HepG2 (cell line): ENCODE measurements at regions of chr1 and their contacts with region 1.

Region 1: DNA sequence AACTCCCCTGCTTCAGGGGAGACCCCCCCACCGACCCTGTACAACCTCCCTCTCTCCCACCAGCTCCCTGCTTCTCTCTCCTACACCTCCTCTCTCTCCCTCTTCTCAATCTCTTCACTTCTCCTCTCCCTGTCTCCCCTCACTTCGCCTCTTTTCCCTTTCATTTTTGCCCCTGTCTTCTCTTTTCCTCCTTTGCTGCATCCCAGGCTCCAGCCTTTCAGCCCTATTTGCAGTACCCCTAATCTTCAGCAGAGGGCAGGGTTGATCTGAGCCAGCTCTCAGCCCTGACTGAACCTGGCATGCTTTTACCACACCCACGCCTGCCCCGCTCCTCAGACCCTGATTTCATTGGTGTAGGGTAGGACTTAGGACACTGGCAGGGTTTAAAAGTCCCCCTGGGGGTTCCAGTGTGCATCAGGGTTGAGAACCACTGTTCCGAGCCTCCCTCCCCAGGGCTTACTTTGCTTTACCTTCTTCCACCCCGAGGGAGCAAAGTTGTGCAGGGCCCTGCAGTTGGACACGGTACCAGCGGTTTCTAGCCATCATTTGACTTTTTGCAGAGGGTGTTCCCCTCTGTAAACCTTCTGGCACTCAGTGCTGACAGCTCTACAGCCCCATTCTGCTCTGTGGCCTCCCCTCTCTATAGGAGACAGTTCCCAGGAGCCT is 67.3 kb upstream of the CNTN2 start:
- DNase-seq: peak; percentile 21
- ATAC-seq: peak; percentile 91
- H3K4me3 ChIP-seq: no peak overlapping the region
- H3K27ac ChIP-seq: no peak overlapping the region
- H3K4me1 ChIP-seq: no peaks in the 10 kb centered on the region
- H3K27me3 ChIP-seq: peaks cover 8 to 55% of the 10 kb centered on the region in 2 experiments; a peak in 4 of 5 replicates
- CTCF ChIP-seq: peak; percentile 80
- EP300 ChIP-seq: no peak
- POLR2A ChIP-seq: no peak
- RAD21 ChIP-seq: peak; percentile 43; the same call in 1 of the 2 replicates

Region 2: DNA sequence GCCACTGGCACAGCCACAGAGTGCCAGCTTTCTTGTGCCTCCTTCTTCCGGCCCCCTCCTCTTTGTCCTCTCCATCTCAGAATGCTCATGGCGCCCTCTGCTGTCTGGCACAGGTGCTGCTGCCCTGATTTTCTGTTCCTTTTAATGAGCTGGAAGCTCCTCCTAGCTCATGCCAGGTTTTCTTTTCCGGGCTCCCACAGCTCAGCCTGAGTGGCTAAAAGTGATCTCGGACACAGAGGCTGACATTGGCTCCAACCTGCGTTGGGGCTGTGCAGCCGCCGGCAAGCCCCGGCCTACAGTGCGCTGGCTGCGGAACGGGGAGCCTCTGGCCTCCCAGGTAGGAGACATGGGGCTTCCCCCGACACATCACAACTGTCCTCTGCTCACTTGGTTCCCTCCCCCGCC is 86.0 kb after region 1 on chr1:
- CTCF ChIA-PET with region 1: interaction called, 14 read pairs
- POLR2A ChIA-PET with region 1: no interaction called
- in situ Hi-C with region 1: loop called (anchors 5 kb)
- intact Hi-C with region 1: no loop called
- DNase-seq: peak; percentile 49
- ATAC-seq: peak; percentile 68
- H3K4me3 ChIP-seq: no peak overlapping the region
- H3K27ac ChIP-seq: no peak overlapping the region
- H3K4me1 ChIP-seq: no peaks in the 10 kb centered on the region
- H3K27me3 ChIP-seq: peaks cover 1 to 43% of the 10 kb centered on the region in 2 experiments; a peak in 3 of 5 replicates
- CTCF ChIP-seq: peak; percentile 87
- EP300 ChIP-seq: no peak
- POLR2A ChIP-seq: no peak
- RAD21 ChIP-seq: peak; percentile 77

Region 3: DNA sequence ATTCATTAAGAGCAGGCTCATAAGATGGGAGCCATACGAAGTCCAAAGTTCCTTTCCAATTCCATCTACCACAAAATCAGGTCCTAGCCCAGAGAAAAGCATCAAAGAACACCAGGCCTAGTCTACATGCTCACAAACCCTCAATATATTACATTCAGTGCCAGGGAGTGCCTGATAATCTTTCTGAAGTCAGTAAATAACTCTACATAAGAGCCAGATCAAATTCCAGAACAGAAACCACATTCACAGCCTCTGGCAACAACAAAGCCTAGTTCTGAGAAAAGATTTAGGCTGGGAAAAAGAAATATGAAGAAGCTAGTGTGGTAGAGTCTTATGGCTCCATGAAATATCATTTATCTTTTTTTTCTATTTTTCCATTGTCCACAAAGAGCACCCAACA is 186.6 kb after region 1 on chr1:
- CTCF ChIA-PET with region 1: no interaction called
- POLR2A ChIA-PET with region 1: no interaction called
- in situ Hi-C with region 1: no loop called
- intact Hi-C with region 1: no loop called
- DNase-seq: no peak
- ATAC-seq: no peak
- H3K4me3 ChIP-seq: no peak overlapping the region
- H3K27ac ChIP-seq: no peak overlapping the region
- H3K4me1 ChIP-seq: no peaks in the 10 kb centered on the region
- H3K27me3 ChIP-seq: no peaks in the 10 kb centered on the region
- CTCF ChIP-seq: no peak
- EP300 ChIP-seq: no peak
- POLR2A ChIP-seq: no peak
- RAD21 ChIP-seq: no peak

Region 4: DNA sequence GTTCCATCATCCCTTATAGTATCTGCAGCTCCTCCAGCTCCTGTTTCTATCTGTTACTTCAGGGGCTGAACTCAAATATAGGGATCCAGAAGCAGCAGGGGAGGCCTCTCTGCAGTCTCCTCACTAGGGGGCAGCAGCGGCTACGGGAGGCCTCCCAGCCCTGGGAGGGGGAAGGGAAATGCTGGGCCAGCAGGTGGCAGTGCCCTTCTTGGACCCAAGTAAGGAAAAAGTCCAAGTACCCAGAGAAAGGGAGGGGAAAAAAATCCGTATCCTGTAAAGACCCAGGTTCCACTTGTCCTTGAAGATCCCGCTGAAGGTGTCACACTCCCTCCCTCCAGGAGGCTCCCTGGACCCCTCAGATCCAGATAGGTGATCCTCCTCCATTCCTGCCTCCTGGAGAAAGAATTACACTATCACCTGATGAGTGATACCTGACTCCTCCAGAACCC is 360.0 kb after region 1 on chr1:
- CTCF ChIA-PET with region 1: no interaction called
- POLR2A ChIA-PET with region 1: no interaction called
- in situ Hi-C with region 1: loop called (anchors 10 kb)
- intact Hi-C with region 1: no loop called
- DNase-seq: peak; percentile 68
- ATAC-seq: peak; percentile 92
- H3K4me3 ChIP-seq: no peak overlapping the region
- H3K27ac ChIP-seq: no peak overlapping the region
- H3K4me1 ChIP-seq: no peaks in the 10 kb centered on the region
- H3K27me3 ChIP-seq: peaks cover 4 to 43% of the 10 kb centered on the region in 2 experiments
- CTCF ChIP-seq: peak; percentile 92
- EP300 ChIP-seq: no peak
- POLR2A ChIP-seq: no peak
- RAD21 ChIP-seq: peak; percentile 81